AG04450 (cell line): ENCODE measurements at regions of chr10 and their contacts with region 1.

Region 1: DNA sequence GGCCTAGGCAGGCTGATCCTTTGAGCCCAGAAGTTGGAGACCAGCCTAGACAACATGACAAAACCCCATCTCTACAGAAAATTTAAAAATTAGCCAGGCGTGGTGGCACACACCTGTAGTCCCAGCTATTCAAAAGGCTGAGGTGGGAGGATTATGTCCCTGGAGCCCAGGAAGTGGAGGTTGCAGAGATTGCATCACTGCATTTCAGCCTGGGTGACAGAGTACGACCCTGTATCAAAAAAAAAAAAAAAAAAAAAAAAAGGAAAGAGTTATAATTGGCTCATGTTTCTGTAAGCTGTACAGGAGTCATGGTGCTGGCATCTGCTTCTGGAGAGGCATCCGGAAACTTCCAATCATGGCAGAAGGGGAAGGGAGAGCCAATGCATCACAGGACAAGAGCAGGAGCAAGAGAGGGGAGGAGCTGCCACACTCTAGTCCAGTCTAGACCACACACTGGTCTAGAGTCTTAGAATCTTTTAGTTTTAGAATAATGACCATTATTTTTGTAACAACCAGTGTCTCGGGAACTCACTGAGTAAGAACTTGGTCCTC is 16.8 kb downstream of the DOCK1 start:
- DNase-seq: peak; percentile 64
- H3K4me3 ChIP-seq: no peak overlapping the region
- H3K27ac ChIP-seq: peak overlapping the region; percentile 57
- H3K27me3 ChIP-seq: no peaks in the 10 kb centered on the region
- CTCF ChIP-seq: no peak

Region 2: DNA sequence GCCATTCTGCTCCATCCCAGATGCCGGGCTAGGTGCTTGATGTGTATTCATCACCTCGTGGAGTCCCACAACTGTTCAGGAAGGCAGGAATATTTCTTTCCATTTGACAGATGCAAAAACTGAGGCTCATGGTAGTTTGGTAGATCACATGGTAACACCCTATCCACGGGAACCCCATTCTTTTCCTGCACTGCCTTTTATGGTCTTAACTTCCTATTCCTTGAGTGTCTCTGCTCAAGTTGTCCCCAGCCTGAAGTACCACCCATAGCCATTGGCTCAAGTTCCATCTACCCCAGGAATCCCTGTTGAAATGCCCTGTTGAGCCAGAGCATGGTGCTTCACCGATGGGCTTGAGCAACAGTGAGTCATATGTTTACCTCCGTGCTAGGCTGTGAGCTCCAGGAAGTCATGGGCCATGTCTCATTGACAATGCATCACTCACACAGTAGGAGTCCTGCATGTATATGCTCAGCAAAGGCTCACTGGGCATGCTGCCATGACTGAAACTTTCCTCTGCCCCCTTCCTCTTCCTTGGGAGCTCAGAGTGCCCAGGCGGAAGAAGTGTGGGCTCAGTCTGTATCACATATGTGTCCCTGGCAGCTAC is 462.1 kb before region 1 on chr10:
- CTCF ChIA-PET with region 1: no interaction called
- POLR2A ChIA-PET with region 1: no interaction called
- DNase-seq: peak; percentile 65
- H3K4me3 ChIP-seq: no peak overlapping the region
- H3K27ac ChIP-seq: no peak overlapping the region
- H3K27me3 ChIP-seq: no peaks in the 10 kb centered on the region
- CTCF ChIP-seq: no peak

Region 3: DNA sequence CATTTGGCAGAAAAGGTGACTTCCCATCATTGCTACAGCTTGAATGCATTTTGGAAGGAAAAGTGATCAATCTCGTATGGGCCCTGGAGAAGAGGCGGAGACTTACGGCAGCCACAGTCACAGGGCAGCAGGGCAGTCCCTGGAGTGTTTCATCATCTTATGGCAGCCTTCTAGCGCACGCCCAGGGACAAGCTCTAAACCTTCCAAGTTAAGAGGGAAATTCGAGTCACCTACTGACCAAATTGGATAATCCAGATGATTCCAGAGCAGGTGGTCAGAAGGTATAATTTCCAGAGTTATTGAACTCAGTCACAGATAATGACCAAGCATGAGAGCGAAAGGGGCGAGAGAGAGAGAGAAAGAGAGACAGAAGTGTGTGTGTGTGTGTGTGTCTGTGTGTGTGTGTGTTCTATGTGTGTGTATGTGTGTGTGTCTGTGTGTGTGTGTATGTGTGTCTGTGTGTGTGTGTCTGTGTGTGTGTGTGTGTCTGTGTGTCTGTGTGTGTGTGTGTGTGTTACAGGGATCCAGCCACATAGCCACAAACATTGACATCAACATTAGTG is 410.1 kb before region 1 on chr10:
- CTCF ChIA-PET with region 1: no interaction called
- POLR2A ChIA-PET with region 1: interaction called, 18 read pairs
- DNase-seq: no peak
- H3K4me3 ChIP-seq: no peak overlapping the region
- H3K27ac ChIP-seq: no peak overlapping the region
- H3K27me3 ChIP-seq: peaks cover 25% of the 10 kb centered on the region
- CTCF ChIP-seq: no peak